GM10248 (cell line): ENCODE measurements at regions of chr17 and their contacts with region 1.

Region 1: GRCh38 chr17:11997147-11997846 is at the start of gene ZNF18:
- DNase-seq: peak; percentile 98
- CTCF ChIP-seq: no peak

Region 2: GRCh38 chr17:11944587-11944986 is 52.7 kb before region 1 on chr17:
- CTCF ChIA-PET with region 1: no interaction called
- POLR2A ChIA-PET with region 1: no interaction called
- DNase-seq: no peak
- CTCF ChIP-seq: no peak

Region 3: DNA sequence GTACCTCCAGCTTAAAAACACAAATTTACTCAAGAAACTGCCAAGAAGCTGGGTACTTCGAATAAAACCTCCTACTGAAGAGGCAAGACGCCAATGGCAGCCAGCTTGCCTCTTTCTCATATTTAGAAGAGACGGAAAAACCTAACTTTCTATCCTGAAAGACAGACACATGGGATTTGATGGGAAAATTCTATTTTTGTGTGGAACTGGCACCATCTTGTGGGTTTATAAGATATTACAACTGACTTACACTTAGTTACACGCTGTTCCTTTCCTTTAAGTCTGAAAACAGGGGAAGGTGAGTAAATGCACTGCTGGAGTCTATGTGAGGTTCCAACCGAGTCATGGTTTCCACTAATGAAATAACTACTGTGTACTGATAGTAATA is 10.4 kb before region 1 on chr17:
- CTCF ChIA-PET with region 1: interaction called, 13 read pairs
- POLR2A ChIA-PET with region 1: no interaction called
- DNase-seq: no peak
- CTCF ChIP-seq: peak; percentile 11

Region 4: GRCh38 chr17:12020642-12021622 is 23.6 kb after region 1 on chr17 and contains the start of gene MAP2K4:
- CTCF ChIA-PET with region 1: interaction called, 4 read pairs
- POLR2A ChIA-PET with region 1: interaction called, 24 read pairs
- DNase-seq: peak; percentile 98
- CTCF ChIP-seq: no peak

Region 5: GRCh38 chr17:12078791-12079190 is 81.5 kb after region 1 on chr17:
- CTCF ChIA-PET with region 1: no interaction called
- POLR2A ChIA-PET with region 1: no interaction called
- DNase-seq: no peak
- CTCF ChIP-seq: no peak